Lower leg skin (tissue), 4 donors: ENCODE measurements at regions of chr18 and their contacts with region 1.

Region 1: DNA sequence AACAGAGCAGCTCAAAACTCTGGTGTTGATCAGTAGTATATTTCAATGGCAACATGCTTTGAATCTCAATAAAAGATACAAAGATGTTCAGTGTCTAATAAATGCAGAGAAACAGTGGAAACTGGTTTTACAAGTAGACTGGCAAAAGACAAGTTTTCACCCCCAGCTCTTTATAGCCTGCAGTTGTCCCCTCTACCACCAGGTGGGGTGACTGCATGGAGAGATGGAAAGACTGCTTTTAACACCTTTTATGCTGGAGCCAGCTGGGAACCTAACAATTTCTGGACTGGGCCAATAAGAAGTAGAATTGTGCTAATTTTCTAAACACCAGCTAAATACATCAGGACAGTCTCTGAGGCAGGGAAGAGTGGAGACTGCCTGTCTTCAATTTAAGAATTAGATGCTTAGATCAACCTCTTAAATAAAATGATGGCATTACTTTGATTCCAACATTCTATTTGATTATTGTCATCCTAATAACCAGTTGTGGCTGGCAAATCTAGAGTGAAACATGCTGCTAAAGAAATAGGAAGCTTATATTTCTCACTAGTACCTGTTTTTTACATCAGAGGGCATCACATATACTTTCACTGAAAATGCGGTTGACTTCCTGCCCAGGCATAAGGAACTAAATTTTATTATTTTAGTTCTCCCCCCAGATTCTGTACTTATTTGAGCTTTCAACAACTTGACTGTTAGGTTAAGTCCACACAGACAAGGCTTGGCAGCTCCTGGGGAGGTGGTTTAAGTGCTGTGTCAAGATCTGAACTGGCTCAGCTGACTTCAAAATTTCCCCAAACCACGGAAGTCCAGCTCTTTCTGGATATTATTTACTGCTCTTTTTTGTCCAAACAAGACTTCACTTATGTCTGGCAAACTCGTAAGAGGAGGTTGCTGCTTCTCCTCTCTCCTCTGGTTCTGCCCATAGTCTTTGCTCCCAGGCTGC is 140.5 kb downstream of the TPGS2 start:
- DNase-seq: peak; percentile 70 to 89
- H3K4me3 ChIP-seq: no peak overlapping the region
- CTCF ChIP-seq: peak in 1 of 3 donors; percentile 61
- POLR2A ChIP-seq: no peak

Region 2: DNA sequence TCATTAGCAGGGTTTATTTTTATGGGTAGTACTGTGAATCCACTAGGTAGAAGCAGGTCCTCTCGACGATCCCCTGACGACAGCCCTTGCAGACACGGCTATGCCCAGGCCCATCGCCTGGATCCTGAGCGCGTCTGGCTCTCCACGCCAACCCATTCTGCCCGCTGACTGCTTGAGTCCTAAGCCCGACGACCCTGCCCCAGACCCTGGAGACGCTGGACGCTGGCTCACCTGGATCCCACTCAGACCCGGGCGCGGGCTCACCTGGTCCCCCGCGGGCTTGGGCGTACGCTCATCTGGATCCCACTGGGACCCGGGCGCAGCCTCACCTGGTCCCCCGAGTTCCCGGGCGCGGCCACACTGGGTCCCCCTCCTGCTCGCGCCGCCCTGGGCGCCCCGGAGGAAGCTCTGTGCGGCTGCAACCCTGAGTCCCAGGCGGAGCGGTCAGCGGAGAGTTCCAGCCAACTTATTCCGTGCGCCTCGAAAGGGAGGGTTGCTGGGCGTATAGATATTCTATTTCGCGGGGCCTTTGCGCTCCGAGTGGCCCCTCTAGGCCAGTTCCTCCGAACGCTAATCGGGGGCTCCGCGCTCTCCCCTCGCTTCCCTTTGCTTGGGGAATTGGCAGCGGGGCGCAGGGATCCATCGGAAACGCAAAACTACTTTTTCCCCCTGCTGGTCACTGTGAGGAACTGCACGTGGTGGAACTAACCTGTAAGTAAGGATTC is 738.2 kb before region 1 on chr18:
- intact Hi-C with region 1: no loop called
- DNase-seq: peak in 1 of 2 donors; percentile 50
- H3K4me3 ChIP-seq: peak overlapping the region; percentile 2
- CTCF ChIP-seq: peak in 1 of 3 donors; percentile 84
- POLR2A ChIP-seq: no peak

Region 3: GRCh38 chr18:36752929-36753865 is 64.9 kb after region 1 on chr18:
- intact Hi-C with region 1: loop called (anchors 5 kb)
- DNase-seq: no peak
- H3K4me3 ChIP-seq: no peak overlapping the region
- CTCF ChIP-seq: no peak
- POLR2A ChIP-seq: no peak

Region 4: GRCh38 chr18:37055137-37055802 is 367.0 kb after region 1 on chr18:
- intact Hi-C with region 1: no loop called
- DNase-seq: no peak
- H3K4me3 ChIP-seq: no peak overlapping the region
- CTCF ChIP-seq: no peak
- POLR2A ChIP-seq: no peak